K562 (cell line): ENCODE measurements at regions of chr20 and their contacts with region 1.

Region 1: DNA sequence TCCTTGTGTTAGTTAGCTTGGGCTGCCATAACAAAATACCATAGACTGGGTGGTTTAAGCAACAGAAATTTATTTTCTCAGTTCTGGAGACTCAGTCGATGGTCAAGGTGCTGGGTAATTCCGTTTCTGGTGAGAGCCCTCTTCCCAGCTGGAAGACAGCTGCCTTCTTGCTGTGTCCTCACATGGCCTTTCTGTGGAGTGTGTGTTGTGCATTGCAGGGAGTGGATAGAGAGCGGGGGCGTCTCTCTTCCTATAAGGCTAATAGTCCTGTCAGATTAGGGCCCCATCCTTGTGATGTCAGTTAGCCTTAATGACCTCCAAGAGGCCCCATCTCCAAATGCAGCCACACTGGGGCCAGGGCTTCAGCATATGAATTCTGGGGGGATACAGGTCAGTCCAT is 19.2 kb downstream of the CHMP4B start:
- DNase-seq: peak in 1 of 4 experiments; percentile 43
- ATAC-seq: peak; percentile 70
- H3K4me3 ChIP-seq: no peak overlapping the region
- H3K27ac ChIP-seq: no peak overlapping the region
- H3K4me1 ChIP-seq: peaks cover 12 to 20% of the 10 kb centered on the region in 2 experiments
- H3K27me3 ChIP-seq: no peaks in the 10 kb centered on the region
- CTCF ChIP-seq: no peak
- EP300 ChIP-seq: peak; percentile 23; the same call in 1 of the 2 replicates
- POLR2A ChIP-seq: no peak
- RAD21 ChIP-seq: no peak

Region 2: GRCh38 chr20:33810885-33811777 is 19.2 kb before region 1 on chr20 and contains the start of gene CHMP4B:
- CTCF ChIA-PET with region 1: no interaction called
- POLR2A ChIA-PET with region 1: interaction called, 14 read pairs
- in situ Hi-C with region 1: no loop called
- intact Hi-C with region 1: no loop called
- DNase-seq: peak; percentile 96 to 99 (median 96)
- ATAC-seq: peak; percentile 98
- H3K4me3 ChIP-seq: peak within 1 kb of the TSS; percentile 92
- H3K27ac ChIP-seq: peak within 1 kb of the TSS; percentile 84
- H3K4me1 ChIP-seq: peaks cover 7 to 22% of the 10 kb centered on the region in 2 experiments
- H3K27me3 ChIP-seq: no peaks in the 10 kb centered on the region
- CTCF ChIP-seq: peak in 1 of 3 experiments; percentile 8; a peak in 1 of 6 replicates
- EP300 ChIP-seq: peak; percentile 33; the same call in 1 of the 2 replicates
- POLR2A ChIP-seq: no peak
- RAD21 ChIP-seq: no peak
- polyA plus RNA-seq, gene CHMP4B: 1.8 to 2.5 TPM